ENCODE measurements at regions of chr16 and their contacts with region 1.

Region 1: GRCh38 chr16:85610508-85611332 is 2.4 kb upstream of the GSE1 start:
- DNase-seq: peak; percentile 90 to 96
- ATAC-seq: peak; percentile 78
- H3K4me3 ChIP-seq: peak overlapping the region in 1 of 2 donors; percentile 33
- H3K27ac ChIP-seq: peak overlapping the region in 1 of 2 donors; percentile 85
- H3K4me1 ChIP-seq: no peaks in the 10 kb centered on the region
- H3K27me3 ChIP-seq: no peaks in the 10 kb centered on the region

Region 2: DNA sequence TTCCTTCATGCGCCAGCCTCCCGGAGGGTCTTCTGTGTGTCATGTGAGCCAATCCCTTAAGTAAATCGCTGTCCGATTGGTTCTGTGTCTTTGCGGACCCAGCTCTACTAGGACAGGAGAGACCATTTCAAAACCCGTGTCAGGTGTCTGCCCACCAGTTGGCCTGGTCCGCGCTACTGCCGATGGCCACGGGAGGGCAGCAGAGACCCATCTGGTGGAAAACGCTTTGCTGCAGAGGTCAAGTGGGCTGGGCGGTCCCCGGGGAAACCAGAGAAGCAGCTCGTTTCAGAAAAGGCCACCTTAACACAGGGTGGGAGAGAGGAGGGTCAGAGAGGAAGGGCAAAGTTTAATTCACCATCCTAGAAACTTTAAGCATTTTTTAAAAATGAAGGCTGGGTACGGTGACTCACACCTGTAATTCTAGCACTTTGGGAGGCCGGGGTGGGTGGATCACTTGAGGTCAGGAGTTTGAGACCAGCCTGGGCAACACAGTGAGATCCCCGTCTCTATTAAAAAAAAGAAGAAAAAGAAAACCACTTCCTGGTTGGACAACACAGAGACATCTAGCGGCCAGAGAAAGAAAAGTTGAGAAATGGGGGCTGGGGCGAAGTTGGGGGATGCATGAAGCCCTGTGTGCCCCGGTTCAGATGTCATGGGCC is 495.7 kb before region 1 on chr16:
- intact Hi-C with region 1: loop called in 1 of 2 experiments (anchors 10 kb)
- DNase-seq: peak; percentile 93 to 97
- ATAC-seq: peak; percentile 92
- H3K4me3 ChIP-seq: no peak overlapping the region
- H3K27ac ChIP-seq: no peak overlapping the region
- H3K4me1 ChIP-seq: no peaks in the 10 kb centered on the region
- H3K27me3 ChIP-seq: no peaks in the 10 kb centered on the region

Region 3: DNA sequence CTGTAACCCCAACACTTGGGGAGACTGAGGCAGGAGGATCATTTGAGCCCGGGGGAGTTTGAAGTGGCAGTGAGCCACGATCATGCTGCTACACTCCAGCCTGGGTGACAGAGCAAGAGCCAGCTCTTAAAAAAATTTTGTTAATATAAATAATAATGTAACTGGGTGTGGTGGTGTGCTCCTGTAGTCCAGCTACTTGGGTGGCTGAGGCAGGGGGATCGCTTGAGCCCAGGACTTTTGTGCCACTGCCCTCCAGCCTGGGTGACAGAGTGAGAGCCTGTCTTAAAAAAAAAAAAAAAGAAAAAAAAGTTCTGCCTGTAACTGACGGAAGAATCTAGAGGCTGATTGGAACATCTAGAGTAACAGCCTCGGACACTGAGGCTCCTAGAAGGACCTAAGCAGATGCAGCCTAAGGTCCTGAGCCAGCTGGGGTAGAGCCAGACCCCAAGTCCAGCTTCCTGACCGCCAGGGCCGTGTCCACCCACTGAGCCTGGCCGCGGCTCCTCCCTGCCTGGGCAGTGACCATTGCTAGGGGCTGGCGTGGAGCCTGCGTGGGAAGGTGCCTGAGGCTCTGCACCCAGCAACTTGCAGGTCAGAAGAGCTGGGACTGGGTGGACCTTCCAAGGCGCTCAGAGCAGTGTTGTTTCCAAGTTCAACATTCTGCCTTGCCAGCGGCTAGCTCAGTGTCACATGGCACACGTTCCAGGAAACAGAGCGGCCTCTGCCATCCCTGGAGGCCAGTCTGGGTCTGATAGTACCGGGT is 289.0 kb before region 1 on chr16:
- intact Hi-C with region 1: loop called (anchors 1 to 5 kb)
- DNase-seq: peak; percentile 98 to 99
- ATAC-seq: peak; percentile 96
- H3K4me3 ChIP-seq: no peak overlapping the region
- H3K27ac ChIP-seq: peak overlapping the region in 1 of 2 donors; percentile 85
- H3K4me1 ChIP-seq: no peaks in the 10 kb centered on the region
- H3K27me3 ChIP-seq: no peaks in the 10 kb centered on the region

Region 4: GRCh38 chr16:85420501-85421337 is 190.0 kb before region 1 on chr16:
- intact Hi-C with region 1: loop called (anchors 2 kb)
- DNase-seq: peak; percentile 66 to 89
- ATAC-seq: peak; percentile 75
- H3K4me3 ChIP-seq: no peak overlapping the region
- H3K27ac ChIP-seq: no peak overlapping the region
- H3K4me1 ChIP-seq: no peaks in the 10 kb centered on the region
- H3K27me3 ChIP-seq: no peaks in the 10 kb centered on the region

Region 5: DNA sequence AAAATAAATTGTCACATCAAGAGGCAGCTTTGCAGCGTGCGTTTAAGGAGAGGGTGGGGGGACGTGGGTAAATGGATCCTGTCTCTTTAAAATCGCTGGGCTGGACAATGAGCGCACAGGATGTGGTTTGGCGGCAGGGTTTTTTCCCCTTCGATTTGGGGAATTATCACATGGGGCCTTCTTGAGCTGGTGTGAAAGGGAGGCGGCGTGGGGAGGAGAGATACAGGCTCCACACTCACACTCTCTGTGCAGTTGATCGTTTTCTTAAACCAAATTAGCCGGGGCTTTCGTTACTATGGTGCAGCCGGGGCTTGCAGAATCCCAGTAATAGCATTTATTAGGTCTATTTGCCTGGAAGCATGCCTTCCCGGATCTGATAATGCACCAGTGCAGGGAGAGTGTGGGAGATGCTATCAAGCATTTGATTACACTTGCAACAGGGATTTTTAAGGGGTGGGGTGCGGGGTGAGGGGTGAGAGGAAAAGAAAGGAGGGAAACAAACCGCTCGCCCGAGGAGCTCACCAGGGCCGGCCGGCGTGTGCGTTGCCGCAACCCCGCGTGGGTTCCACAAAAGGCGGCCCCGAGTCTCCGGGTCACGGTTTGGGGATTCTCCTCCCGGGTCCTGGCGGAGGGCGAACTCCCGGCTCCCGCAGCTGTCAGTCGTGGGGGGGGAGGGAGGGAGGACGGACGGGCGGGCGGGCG is 56.5 kb before region 1 on chr16:
- intact Hi-C with region 1: loop called (anchors 2 to 5 kb)
- DNase-seq: peak in 1 of 2 donors; percentile 88
- ATAC-seq: peak; percentile 66
- H3K4me3 ChIP-seq: peak overlapping the region; percentile 74 to 83
- H3K27ac ChIP-seq: peak overlapping the region in 1 of 2 donors; percentile 36
- H3K4me1 ChIP-seq: no peaks in the 10 kb centered on the region
- H3K27me3 ChIP-seq: no peaks in the 10 kb centered on the region